ENCODE measurements at regions of chr18 and their contacts with region 1.

Region 1: GRCh38 chr18:24894880-24895279 is 434.4 kb downstream of the HRH4 start:
- DNase-seq: no peak
- ATAC-seq: no peak

Region 2: DNA sequence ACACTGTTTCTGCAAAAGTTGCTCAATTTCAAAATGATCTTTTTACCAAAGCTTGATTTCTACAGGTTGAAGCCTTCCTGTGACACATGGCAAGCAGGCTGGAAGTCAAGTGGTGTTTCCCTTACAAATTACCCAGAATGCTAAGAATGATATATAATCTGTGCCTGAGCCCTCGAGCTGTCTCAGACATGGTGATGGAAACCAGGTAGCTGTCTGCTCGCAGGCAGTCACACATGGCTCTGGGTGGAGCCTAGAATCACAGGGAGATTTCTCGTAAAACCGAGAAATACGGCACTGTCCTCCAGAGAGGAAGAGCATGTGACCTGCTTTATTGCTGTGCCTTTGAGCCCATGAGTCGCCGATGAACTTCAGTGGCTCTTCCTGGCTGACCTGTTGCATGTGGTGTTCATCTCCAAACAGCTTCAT is 64.2 kb after region 1 on chr18:
- intact Hi-C with region 1: loop called in 1 of 2 experiments (anchors 10 kb)
- DNase-seq: no peak
- ATAC-seq: no peak

Region 3: DNA sequence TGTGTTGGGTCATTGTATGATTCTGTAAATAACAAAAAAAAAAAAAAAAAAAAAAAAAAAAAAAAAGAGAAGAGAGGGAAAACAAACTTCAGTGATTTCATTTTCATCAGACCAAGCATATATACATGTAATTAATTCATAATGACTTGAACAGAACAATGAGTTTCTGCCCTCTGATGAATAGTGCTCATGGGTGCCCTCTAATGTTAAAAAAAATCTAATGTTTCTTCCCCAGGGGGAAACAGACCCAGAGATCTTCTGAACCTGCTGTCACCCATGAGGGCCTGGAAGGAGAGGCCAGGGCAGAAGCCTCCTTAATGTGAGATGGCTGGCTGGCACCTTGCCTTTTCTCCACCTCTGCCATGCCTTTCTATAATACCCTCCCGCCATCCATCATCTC is 167.8 kb after region 1 on chr18:
- intact Hi-C with region 1: loop called in 1 of 2 experiments (anchors 10 kb)
- DNase-seq: no peak
- ATAC-seq: no peak

Measured in left cardiac atrium (tissue), 4 donors.